ENCODE measurements at regions of chr2 and their contacts with region 1.

Region 1: GRCh38 chr2:68878753-68879152 is 7.6 kb upstream of the BMP10 start:
- DNase-seq: no peak
- H3K4me3 ChIP-seq: no peak overlapping the region
- CTCF ChIP-seq: no peak

Region 2: GRCh38 chr2:68824831-68825230 is 53.9 kb before region 1 on chr2:
- in situ Hi-C with region 1: loop called (anchors 5 kb)
- DNase-seq: peak; percentile 65
- H3K4me3 ChIP-seq: no peak overlapping the region
- CTCF ChIP-seq: no peak

Region 3: DNA sequence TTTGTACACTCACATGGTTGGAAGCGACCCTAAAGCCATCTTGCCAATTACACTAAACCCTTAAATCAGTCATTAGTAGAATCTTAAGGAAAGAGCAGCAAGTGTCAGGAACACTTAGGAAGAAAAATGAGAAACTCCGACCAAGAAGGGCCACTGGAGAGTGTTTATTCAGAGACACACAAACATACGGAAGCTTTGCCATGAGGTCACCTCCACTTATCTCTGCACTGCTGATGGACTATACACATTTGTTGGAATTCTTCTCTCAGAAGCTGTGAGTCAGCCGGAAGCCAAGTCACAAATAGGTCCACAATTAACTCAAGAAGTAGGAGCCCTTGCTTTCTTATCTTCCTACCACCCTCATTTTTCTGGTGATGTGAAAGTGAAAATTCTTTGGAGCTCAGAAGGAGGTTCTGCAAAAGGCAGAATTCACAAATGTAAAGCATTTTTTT is 29.1 kb before region 1 on chr2:
- in situ Hi-C with region 1: no loop called
- DNase-seq: no peak
- H3K4me3 ChIP-seq: no peak overlapping the region
- CTCF ChIP-seq: no peak